ENCODE measurements at regions of chr2 and their contacts with region 1.

Region 1: GRCh38 chr2:226791487-226792081 is 8.0 kb downstream of the IRS1 start:
- DNase-seq: peak; percentile 86 to 97
- H3K4me3 ChIP-seq: peak overlapping the region; percentile 44
- CTCF ChIP-seq: no peak
- POLR2A ChIP-seq: no peak

Region 2: GRCh38 chr2:226215902-226216503 is 575.6 kb before region 1 on chr2:
- intact Hi-C with region 1: loop called (anchors 10 kb)
- DNase-seq: peak in 1 of 2 donors; percentile 43
- H3K4me3 ChIP-seq: no peak overlapping the region
- CTCF ChIP-seq: no peak
- POLR2A ChIP-seq: no peak

Region 3: GRCh38 chr2:227684276-227684675 is 892.7 kb after region 1 on chr2:
- intact Hi-C with region 1: no loop called
- DNase-seq: no peak
- H3K4me3 ChIP-seq: no peak overlapping the region
- CTCF ChIP-seq: no peak
- POLR2A ChIP-seq: no peak

Region 4: GRCh38 chr2:228699400-228699799 is 1907.8 kb after region 1 on chr2:
- intact Hi-C with region 1: no loop called
- DNase-seq: no peak
- H3K4me3 ChIP-seq: no peak overlapping the region
- CTCF ChIP-seq: no peak
- POLR2A ChIP-seq: no peak